ENCODE measurements at regions of chr12 and their contacts with region 1.

Region 1: DNA sequence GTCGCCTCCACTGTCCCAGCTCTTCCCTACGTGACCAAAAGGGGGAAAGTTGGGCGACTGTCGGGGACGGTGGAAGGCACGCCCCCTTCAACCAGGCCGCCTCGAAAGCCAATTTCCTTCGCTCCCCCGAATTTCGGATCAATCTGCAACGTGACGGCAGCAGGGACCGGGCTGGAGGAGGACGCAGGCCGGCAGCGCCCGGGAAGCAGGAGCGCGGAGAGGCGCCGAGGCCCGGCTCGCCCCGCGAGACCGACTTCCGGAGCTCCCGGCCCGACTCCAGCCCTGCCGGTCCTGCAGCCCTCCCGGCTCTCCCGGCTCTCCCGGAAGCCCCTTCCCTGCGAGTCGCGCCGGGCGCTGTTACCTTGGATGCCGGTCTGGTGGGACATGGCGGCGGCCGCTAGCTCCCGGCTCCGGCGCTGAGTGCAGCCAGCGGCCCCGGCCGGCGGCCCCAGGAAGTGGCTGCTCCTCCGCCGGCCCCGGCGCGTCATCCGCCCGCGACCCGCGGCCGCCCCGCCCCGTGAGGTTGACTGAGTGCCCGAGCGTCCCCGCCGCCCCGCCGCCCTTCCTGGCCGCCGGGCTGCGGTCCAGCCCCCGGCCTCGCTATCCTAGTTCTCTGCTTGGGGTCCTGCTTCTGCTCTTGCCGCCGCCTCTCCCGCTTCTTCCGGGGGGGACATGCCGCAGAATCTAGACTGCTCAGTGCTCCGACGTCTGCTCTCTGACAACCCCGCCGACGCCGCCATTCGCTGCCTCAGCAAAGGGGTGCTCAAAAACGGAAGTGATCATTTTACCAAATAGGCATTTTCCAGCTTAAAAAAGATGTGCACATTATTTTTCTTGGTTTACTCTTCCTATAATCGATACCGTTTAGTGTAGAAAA is at the start of gene TWF1:
- DNase-seq: peak; percentile 34 to 94
- H3K4me3 ChIP-seq: peak within 1 kb of the TSS; percentile 53 to 98 (median 78)
- H3K27ac ChIP-seq: peak within 1 kb of the TSS; percentile 95
- H3K4me1 ChIP-seq: peaks cover 0 to 3% (median 0%) of the 10 kb centered on the region in 4 experiments; a peak in 1 of 7 replicates
- H3K27me3 ChIP-seq: no peaks in the 10 kb centered on the region
- CTCF ChIP-seq: peak; percentile 27 to 43 (median 43); a peak in 3 of 4 replicates
- EP300 ChIP-seq: no peak
- POLR2A ChIP-seq: peak; percentile 72 to 91
- RAD21 ChIP-seq: peak; percentile 5 to 15; a peak in 2 of 4 replicates
- total RNA-seq, gene TWF1: 24.6 and 27.9 TPM in 2 replicates

Region 2: GRCh38 chr12:43824207-43824775 is 18.2 kb after region 1 on chr12:
- CTCF ChIA-PET with region 1: interaction called, 6 read pairs
- POLR2A ChIA-PET with region 1: interaction called, 15 read pairs
- DNase-seq: no peak
- H3K4me3 ChIP-seq: no peak overlapping the region
- H3K27ac ChIP-seq: no peak overlapping the region
- H3K4me1 ChIP-seq: no peaks in the 10 kb centered on the region
- H3K27me3 ChIP-seq: no peaks in the 10 kb centered on the region
- CTCF ChIP-seq: no peak
- EP300 ChIP-seq: no peak
- POLR2A ChIP-seq: no peak
- RAD21 ChIP-seq: no peak

Region 3: DNA sequence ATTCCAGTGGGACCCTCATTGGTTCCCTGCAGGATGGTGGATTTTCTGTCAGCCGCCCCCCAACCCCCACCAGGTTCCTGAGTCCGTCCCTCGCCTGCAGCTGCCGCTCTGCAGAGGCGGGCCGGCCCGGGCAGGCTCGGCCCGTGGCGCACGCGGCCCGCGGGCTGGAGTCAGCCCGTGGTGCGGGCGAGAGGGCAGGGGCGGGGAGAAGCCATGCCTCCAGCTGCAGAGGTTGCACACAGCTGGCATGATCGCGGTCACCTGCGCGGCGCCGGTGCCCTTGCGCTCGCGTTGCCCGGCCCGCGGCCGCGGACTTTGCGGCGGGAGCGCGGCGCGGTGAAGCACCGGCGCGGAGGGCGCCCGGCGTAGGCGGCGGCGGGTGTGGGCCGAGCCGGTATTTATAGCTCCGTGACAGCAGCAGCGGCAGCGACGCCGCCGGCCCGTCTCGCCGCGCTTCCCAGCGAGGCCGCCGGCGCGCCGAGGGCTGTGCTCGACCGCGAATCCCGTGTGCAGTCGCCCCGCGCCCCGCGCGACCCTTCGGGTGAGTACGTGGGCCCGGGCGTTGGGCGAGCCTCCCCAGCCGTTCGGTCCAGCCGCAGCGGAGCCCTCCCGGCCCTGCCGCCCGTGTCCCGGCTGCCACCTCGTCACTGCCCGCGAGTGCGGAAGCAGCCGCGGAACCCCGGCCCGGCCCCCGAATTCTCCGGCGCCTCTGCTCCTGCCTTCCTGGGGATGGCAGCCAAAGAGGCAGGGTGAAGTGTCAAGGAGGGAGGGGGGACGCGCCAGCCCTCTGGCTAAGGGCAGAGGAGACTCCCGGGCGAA is 29.8 kb after region 1 on chr12 and contains the start of gene TMEM117:
- CTCF ChIA-PET with region 1: interaction called, 4 read pairs
- POLR2A ChIA-PET with region 1: interaction called, 15 read pairs
- DNase-seq: peak in 1 of 2 experiments; percentile 80
- H3K4me3 ChIP-seq: peak within 1 kb of the TSS; percentile 61 to 76 (median 69)
- H3K27ac ChIP-seq: no peak within 1 kb of the TSS
- H3K4me1 ChIP-seq: peaks cover 0 to 5% (median 2%) of the 10 kb centered on the region in 4 experiments; a peak in 2 of 7 replicates
- H3K27me3 ChIP-seq: peaks cover 0 to 25% (median 9%) of the 10 kb centered on the region in 4 experiments; a peak in 5 of 7 replicates
- CTCF ChIP-seq: no peak
- EP300 ChIP-seq: no peak
- POLR2A ChIP-seq: peak in 1 of 2 experiments; percentile 51; a peak in 1 of 3 replicates
- RAD21 ChIP-seq: no peak
- total RNA-seq, gene TMEM117: 1.4 TPM in 2 replicates

Region 4: GRCh38 chr12:43882578-43883178 is 76.6 kb after region 1 on chr12:
- CTCF ChIA-PET with region 1: interaction called, 28 read pairs
- POLR2A ChIA-PET with region 1: no interaction called
- DNase-seq: no peak
- H3K4me3 ChIP-seq: no peak overlapping the region
- H3K27ac ChIP-seq: no peak overlapping the region
- H3K4me1 ChIP-seq: no peaks in the 10 kb centered on the region
- H3K27me3 ChIP-seq: no peaks in the 10 kb centered on the region
- CTCF ChIP-seq: peak in 2 of 3 experiments; percentile 71 to 78; a peak in 3 of 4 replicates
- EP300 ChIP-seq: no peak
- POLR2A ChIP-seq: no peak
- RAD21 ChIP-seq: peak; percentile 95 to 96